T-cell (primary cell): ENCODE measurements at regions of chr3 and their contacts with region 1.

Region 1: GRCh38 chr3:86830566-86830965 is 160.4 kb downstream of the VGLL3 start:
- DNase-seq: no peak
- ATAC-seq: no peak
- H3K4me3 ChIP-seq: no peak overlapping the region
- H3K4me3 Mint-ChIP-seq: no peak overlapping the region
- H3K27ac ChIP-seq: no peak overlapping the region
- H3K27ac Mint-ChIP-seq: no peak overlapping the region
- H3K4me1 ChIP-seq: no peaks in the 10 kb centered on the region
- H3K4me1 Mint-ChIP-seq: no peaks in the 10 kb centered on the region
- H3K27me3 ChIP-seq: no peaks in the 10 kb centered on the region
- H3K27me3 Mint-ChIP-seq: no peaks in the 10 kb centered on the region

Region 2: GRCh38 chr3:85846940-85847339 is 983.6 kb before region 1 on chr3:
- CTCF ChIA-PET with region 1: interaction called in 1 of 2 experiments, 11 read pairs
- POLR2A ChIA-PET with region 1: no interaction called
- DNase-seq: no peak
- ATAC-seq: no peak
- H3K4me3 ChIP-seq: no peak overlapping the region
- H3K4me3 Mint-ChIP-seq: no peak overlapping the region
- H3K27ac ChIP-seq: no peak overlapping the region
- H3K27ac Mint-ChIP-seq: no peak overlapping the region
- H3K4me1 ChIP-seq: no peaks in the 10 kb centered on the region
- H3K4me1 Mint-ChIP-seq: no peaks in the 10 kb centered on the region
- H3K27me3 ChIP-seq: no peaks in the 10 kb centered on the region
- H3K27me3 Mint-ChIP-seq: no peaks in the 10 kb centered on the region

Region 3: DNA sequence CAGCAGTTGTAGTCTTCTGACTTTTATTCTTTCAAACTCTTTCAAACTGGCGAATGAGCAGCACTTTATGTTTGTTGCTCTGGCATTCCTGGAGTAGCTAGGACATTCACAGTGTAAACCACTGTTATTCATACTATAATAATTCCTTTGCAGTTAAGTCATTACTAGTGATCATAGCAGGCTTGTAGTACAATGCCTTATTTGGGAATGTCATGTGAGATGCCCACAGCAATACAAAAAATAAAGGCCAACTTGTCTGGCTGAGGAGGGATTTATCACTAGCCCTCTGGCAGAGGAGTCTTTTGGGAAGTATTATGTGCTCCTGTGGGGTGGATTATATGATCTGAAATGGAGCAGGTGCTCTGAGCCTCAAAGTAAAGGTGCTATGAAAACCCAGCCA is 36.8 kb before region 1 on chr3:
- CTCF ChIA-PET with region 1: no interaction called
- POLR2A ChIA-PET with region 1: no interaction called
- DNase-seq: no peak
- ATAC-seq: no peak
- H3K4me3 ChIP-seq: no peak overlapping the region
- H3K4me3 Mint-ChIP-seq: no peak overlapping the region
- H3K27ac ChIP-seq: no peak overlapping the region
- H3K27ac Mint-ChIP-seq: no peak overlapping the region
- H3K4me1 ChIP-seq: no peaks in the 10 kb centered on the region
- H3K4me1 Mint-ChIP-seq: no peaks in the 10 kb centered on the region
- H3K27me3 ChIP-seq: no peaks in the 10 kb centered on the region
- H3K27me3 Mint-ChIP-seq: no peaks in the 10 kb centered on the region